ENCODE measurements at regions of chr2 and their contacts with region 1.

Region 1: GRCh38 chr2:233990261-233990798 is 60.2 kb upstream of the SPP2 start:
- DNase-seq: peak; percentile 81
- H3K4me3 Mint-ChIP-seq: peak overlapping the region; percentile 17
- H3K27ac Mint-ChIP-seq: peak overlapping the region; percentile 49
- H3K4me1 Mint-ChIP-seq: peaks cover 51% of the 10 kb centered on the region
- H3K27me3 Mint-ChIP-seq: no peaks in the 10 kb centered on the region

Region 2: DNA sequence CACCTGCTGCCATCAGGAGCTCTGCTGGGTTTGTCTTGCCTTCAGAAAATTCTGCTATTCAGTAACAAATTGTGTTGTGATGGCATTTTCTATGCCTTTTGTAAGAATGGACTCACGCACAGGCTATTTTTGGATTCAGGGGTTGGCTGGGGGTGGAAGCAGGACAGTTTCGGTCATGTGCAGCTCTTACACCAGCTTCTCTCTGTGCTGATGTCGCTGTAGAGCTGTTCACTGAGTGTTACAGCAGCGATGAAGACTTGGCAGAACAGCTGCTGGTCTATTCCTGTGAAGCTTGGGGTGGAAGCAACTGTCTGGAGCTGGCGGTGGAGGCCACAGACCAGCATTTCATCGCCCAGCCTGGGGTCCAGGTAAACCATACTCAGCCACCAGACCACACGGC is 23.9 kb before region 1 on chr2:
- CTCF ChIA-PET with region 1: no interaction called
- POLR2A ChIA-PET with region 1: no interaction called
- intact Hi-C with region 1: no loop called
- DNase-seq: no peak
- H3K4me3 Mint-ChIP-seq: no peak overlapping the region
- H3K27ac Mint-ChIP-seq: no peak overlapping the region
- H3K4me1 Mint-ChIP-seq: peaks cover 7% of the 10 kb centered on the region
- H3K27me3 Mint-ChIP-seq: no peaks in the 10 kb centered on the region

Region 3: GRCh38 chr2:234003972-234004617 is 13.8 kb after region 1 on chr2:
- CTCF ChIA-PET with region 1: no interaction called
- POLR2A ChIA-PET with region 1: no interaction called
- intact Hi-C with region 1: loop called (anchors 2 kb)
- DNase-seq: peak; percentile 71
- H3K4me3 Mint-ChIP-seq: no peak overlapping the region
- H3K27ac Mint-ChIP-seq: no peak overlapping the region
- H3K4me1 Mint-ChIP-seq: peaks cover 38% of the 10 kb centered on the region
- H3K27me3 Mint-ChIP-seq: no peaks in the 10 kb centered on the region

Region 4: DNA sequence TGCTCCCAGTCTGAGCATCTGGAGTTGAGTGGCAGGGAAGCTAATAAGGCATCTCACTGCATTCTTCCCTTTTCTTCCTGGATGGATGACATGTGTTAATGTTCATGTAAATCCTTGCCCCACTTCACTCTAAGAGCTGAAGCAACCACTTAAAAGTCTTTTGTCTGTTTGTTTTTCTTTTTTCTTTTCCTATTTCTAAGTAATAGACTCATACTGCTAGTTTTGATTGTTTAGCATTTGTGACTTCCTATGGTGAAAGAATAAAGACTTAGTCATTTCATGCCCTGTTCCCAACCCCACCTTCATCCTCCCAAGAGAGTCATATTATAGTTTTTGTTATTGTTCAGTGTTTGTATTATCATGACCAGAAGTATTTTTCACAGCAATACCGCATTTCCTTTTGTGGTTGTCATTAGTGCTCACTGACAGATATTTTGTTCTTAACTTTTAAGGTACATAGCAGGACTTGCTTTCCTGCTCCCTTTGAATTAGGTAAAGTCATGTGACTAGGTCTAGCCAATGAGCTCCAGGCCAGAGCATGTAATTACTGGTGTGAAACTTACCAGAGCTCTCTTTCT is 42.0 kb after region 1 on chr2:
- CTCF ChIA-PET with region 1: no interaction called
- POLR2A ChIA-PET with region 1: no interaction called
- intact Hi-C with region 1: loop called (anchors 2 kb)
- DNase-seq: peak; percentile 55
- H3K4me3 Mint-ChIP-seq: no peak overlapping the region
- H3K27ac Mint-ChIP-seq: peak overlapping the region; percentile 47
- H3K4me1 Mint-ChIP-seq: peaks cover 41% of the 10 kb centered on the region
- H3K27me3 Mint-ChIP-seq: no peaks in the 10 kb centered on the region

Region 5: GRCh38 chr2:234102112-234102511 is 111.8 kb after region 1 on chr2:
- CTCF ChIA-PET with region 1: no interaction called
- POLR2A ChIA-PET with region 1: no interaction called
- intact Hi-C with region 1: loop called (anchors 5 kb)
- DNase-seq: no peak
- H3K4me3 Mint-ChIP-seq: no peak overlapping the region
- H3K27ac Mint-ChIP-seq: no peak overlapping the region
- H3K4me1 Mint-ChIP-seq: peaks cover 32% of the 10 kb centered on the region
- H3K27me3 Mint-ChIP-seq: no peaks in the 10 kb centered on the region

Region 6: DNA sequence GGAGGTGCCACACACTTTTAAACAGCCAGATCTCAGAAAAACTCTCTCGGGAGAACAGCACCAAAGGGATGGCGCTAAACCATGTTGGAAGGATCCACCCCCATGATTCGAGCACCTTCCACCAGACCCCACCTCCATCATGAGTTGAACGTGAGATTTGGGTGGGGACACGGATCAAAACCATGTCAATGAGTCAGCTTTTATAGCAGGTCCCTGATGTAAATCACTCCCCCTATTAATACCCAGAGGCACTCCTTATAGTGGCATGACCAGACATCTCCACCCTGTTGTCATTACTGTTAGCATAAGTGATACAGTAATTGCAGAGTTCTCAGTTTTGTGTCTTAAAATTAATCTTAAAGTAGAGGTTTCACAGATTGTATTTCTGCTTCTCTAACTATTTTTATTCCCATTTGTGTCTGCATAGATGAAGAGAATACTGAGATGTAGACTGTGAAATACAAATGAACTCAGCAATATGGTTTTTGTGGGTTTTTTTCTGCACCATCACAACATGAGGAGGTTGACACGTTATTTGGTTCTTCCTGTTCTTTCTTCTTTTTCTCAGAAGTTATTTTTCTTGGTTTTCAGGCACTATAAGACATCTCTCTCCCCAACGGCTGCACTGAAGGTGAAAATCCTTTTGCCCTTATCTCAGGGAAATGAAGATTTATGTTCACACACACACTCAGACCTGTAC is 288.4 kb after region 1 on chr2:
- CTCF ChIA-PET with region 1: no interaction called
- POLR2A ChIA-PET with region 1: no interaction called
- intact Hi-C with region 1: loop called (anchors 5 kb)
- DNase-seq: peak; percentile 31
- H3K4me3 Mint-ChIP-seq: peak overlapping the region; percentile 13
- H3K27ac Mint-ChIP-seq: peak overlapping the region; percentile 82
- H3K4me1 Mint-ChIP-seq: peaks cover 47% of the 10 kb centered on the region
- H3K27me3 Mint-ChIP-seq: no peaks in the 10 kb centered on the region

Measured in activated CD4-positive, alpha-beta memory T cell treated with anti-CD3 and anti-CD28 coated beads for 36 hours (primary cell).